ENCODE measurements at regions of chr12 and their contacts with region 1.

Region 1: GRCh38 chr12:121110211-121110940 is 22.3 kb upstream of the P2RX7 start:
- DNase-seq: peak; percentile 76
- H3K4me3 Mint-ChIP-seq: no peak overlapping the region
- H3K27ac Mint-ChIP-seq: no peak overlapping the region
- H3K4me1 Mint-ChIP-seq: no peaks in the 10 kb centered on the region
- H3K27me3 Mint-ChIP-seq: no peaks in the 10 kb centered on the region
- CTCF ChIP-seq: peak; percentile 94

Region 2: GRCh38 chr12:120528861-120529525 is 581.4 kb before region 1 on chr12 and contains the start of gene COQ5:
- CTCF ChIA-PET with region 1: no interaction called
- POLR2A ChIA-PET with region 1: no interaction called
- intact Hi-C with region 1: no loop called
- DNase-seq: peak; percentile 90
- H3K4me3 Mint-ChIP-seq: peak within 1 kb of the TSS; percentile 79
- H3K27ac Mint-ChIP-seq: peak within 1 kb of the TSS; percentile 96
- H3K4me1 Mint-ChIP-seq: peaks cover 6% of the 10 kb centered on the region
- H3K27me3 Mint-ChIP-seq: no peaks in the 10 kb centered on the region
- CTCF ChIP-seq: no peak
- total RNA-seq, gene COQ5: 21.5 and 22.9 TPM in 2 replicates

Region 3: GRCh38 chr12:121005346-121005815 is 105.0 kb before region 1 on chr12:
- CTCF ChIA-PET with region 1: interaction called, 4 read pairs
- POLR2A ChIA-PET with region 1: no interaction called
- intact Hi-C with region 1: loop called (anchors 5 kb)
- DNase-seq: peak; percentile 53
- H3K4me3 Mint-ChIP-seq: no peak overlapping the region
- H3K27ac Mint-ChIP-seq: no peak overlapping the region
- H3K4me1 Mint-ChIP-seq: no peaks in the 10 kb centered on the region
- H3K27me3 Mint-ChIP-seq: no peaks in the 10 kb centered on the region
- CTCF ChIP-seq: peak; percentile 79

Region 4: DNA sequence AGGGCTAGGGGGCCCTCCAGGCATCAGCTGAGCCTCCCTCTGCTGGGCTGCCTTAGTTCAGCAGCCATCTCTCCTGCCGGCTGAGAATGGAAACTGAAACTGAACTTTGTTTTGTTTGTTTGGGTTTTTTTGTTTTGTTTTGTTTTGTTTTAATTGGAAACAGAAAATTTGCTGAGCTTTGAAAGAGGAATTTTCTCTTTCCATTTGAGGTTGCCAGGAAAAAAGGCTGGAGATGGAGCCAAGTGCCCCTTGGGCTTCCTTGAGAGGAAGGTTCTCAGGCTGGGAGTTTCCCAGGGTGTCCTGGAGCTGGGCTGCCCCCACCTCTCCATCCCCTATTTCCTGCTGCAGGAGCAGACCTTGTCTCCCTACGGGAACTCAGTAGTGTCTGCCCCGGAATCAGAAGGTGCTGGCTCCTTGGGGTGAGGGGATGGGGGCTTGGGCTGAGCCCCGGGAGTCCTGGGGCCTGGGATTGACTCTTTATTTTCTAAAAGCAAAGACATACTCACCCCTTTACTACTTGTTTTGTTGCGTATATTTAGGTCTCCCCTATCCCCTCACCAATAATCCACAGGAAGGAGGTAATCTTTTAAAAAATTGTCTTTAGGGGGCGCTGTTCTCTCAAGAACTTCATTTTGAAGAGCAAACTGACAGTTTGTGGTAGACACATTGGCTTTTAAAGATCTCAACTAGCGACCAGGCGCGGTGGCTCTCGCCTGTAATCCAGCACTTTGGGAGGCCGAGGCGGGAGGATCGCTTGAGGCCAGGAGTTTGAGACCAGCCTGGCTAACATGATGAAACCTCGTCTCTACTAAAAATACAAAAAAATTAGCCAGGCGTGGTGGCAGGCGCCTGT is 50.0 kb before region 1 on chr12:
- CTCF ChIA-PET with region 1: interaction called, 5 read pairs
- POLR2A ChIA-PET with region 1: no interaction called
- intact Hi-C with region 1: loop called (anchors 5 kb)
- DNase-seq: peak; percentile 52
- H3K4me3 Mint-ChIP-seq: no peak overlapping the region
- H3K27ac Mint-ChIP-seq: no peak overlapping the region
- H3K4me1 Mint-ChIP-seq: no peaks in the 10 kb centered on the region
- H3K27me3 Mint-ChIP-seq: no peaks in the 10 kb centered on the region
- CTCF ChIP-seq: peak; percentile 52

Region 5: DNA sequence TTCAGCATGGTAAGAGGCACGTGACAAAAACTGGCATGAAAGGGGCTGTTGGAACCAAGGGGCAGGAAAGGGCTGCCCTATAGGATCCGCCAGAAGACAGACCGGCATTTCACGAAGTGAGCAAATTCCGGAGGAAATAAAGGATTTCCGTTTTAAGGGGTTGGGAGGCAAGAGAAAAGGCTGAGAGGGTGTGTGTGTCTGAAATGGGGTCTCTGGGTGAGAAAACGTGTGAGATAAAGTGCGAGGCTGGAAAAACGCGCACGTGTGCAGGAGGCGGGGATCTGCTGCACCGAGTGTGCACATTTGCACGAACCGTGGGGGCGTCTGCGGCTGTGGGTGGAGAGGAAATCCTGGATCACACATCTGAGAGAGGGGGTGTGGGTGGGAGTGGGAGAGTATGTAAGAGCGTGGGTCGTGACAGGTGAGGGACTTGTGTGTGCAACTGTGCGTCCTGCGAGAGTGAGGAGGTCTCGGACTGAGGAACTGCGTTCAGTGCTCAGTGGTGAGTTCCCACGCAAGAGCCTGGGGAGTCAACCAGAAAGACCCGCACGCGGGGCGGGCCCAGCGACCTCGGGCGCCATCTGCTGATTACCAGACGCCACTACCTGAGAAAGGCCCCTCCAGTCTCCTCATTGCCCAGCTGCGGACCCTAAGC is 14.7 kb before region 1 on chr12:
- CTCF ChIA-PET with region 1: interaction called, 11 read pairs
- POLR2A ChIA-PET with region 1: no interaction called
- intact Hi-C with region 1: no loop called
- DNase-seq: peak; percentile 57
- H3K4me3 Mint-ChIP-seq: peak overlapping the region; percentile 47
- H3K27ac Mint-ChIP-seq: no peak overlapping the region
- H3K4me1 Mint-ChIP-seq: peaks cover 9% of the 10 kb centered on the region
- H3K27me3 Mint-ChIP-seq: peaks cover 12% of the 10 kb centered on the region
- CTCF ChIP-seq: peak; percentile 90

Region 6: DNA sequence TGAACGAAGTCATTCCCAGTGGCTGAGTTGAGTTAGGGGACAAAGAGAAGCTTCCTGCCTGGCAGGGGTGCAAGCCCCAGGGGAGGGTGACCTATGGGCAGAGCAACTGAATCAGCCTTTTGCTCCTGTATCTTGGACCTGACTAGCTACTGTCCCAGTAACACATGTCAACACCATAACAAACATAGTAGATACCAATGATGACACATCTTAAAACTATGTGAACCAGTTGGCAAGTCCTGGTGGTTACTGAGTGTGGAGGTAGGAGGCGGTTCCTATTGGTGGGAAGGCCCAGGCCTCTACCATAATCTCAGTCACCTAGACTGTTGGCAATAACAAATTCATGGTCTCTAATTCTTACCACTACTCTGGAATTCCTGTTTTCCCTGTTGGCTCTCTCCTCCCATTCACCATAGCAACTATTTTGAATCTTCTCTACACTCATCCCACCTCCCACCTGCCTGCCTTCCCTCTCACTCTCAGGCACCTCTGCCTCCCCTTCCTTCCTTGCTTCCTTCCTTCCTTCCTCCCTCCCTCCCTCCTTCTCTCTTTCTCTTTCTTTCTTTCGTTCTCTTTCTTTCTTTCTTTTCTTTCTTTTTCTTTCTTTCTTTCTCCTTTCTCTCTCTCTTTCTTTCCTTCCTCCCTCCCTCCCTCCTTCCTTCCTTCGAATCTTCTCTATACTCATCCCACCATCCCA is 14.2 kb after region 1 on chr12:
- CTCF ChIA-PET with region 1: interaction called, 18 read pairs
- POLR2A ChIA-PET with region 1: no interaction called
- intact Hi-C with region 1: no loop called
- DNase-seq: peak; percentile 90
- H3K4me3 Mint-ChIP-seq: no peak overlapping the region
- H3K27ac Mint-ChIP-seq: peak overlapping the region; percentile 92
- H3K4me1 Mint-ChIP-seq: peaks cover 24% of the 10 kb centered on the region
- H3K27me3 Mint-ChIP-seq: peaks cover 22% of the 10 kb centered on the region
- CTCF ChIP-seq: no peak

Region 7: GRCh38 chr12:121196902-121197301 is 86.5 kb after region 1 on chr12:
- CTCF ChIA-PET with region 1: no interaction called
- POLR2A ChIA-PET with region 1: no interaction called
- intact Hi-C with region 1: no loop called
- DNase-seq: no peak
- H3K4me3 Mint-ChIP-seq: no peak overlapping the region
- H3K27ac Mint-ChIP-seq: no peak overlapping the region
- H3K4me1 Mint-ChIP-seq: peaks cover 7% of the 10 kb centered on the region
- H3K27me3 Mint-ChIP-seq: no peaks in the 10 kb centered on the region
- CTCF ChIP-seq: no peak

Region 8: GRCh38 chr12:121296618-121297434 is 186.4 kb after region 1 on chr12 and contains the start of gene CAMKK2:
- CTCF ChIA-PET with region 1: no interaction called
- POLR2A ChIA-PET with region 1: no interaction called
- intact Hi-C with region 1: loop called (anchors 2 kb)
- DNase-seq: peak; percentile 82
- H3K4me3 Mint-ChIP-seq: peak within 1 kb of the TSS; percentile 78
- H3K27ac Mint-ChIP-seq: peak within 1 kb of the TSS; percentile 49
- H3K4me1 Mint-ChIP-seq: peaks cover 11% of the 10 kb centered on the region
- H3K27me3 Mint-ChIP-seq: no peaks in the 10 kb centered on the region
- CTCF ChIP-seq: peak; percentile 26
- total RNA-seq, gene CAMKK2: 31.9 and 36.3 TPM in 2 replicates

Measured in MCF 10A (cell line).